CD14-positive monocyte (primary cell): ENCODE measurements at regions of chrX and their contacts with region 1.

Region 1: GRCh38 chrX:9995855-9996339 is 28.7 kb downstream of the CLDN34 start:
- DNase-seq: peak; percentile 60 to 70 (median 69)
- H3K4me3 ChIP-seq: no peak overlapping the region
- H3K4me3 Mint-ChIP-seq: no peak overlapping the region
- H3K27ac ChIP-seq: no peak overlapping the region
- H3K27ac Mint-ChIP-seq: no peak overlapping the region
- H3K4me1 ChIP-seq: no peaks in the 10 kb centered on the region
- H3K4me1 Mint-ChIP-seq: peaks cover 4% of the 10 kb centered on the region
- H3K27me3 ChIP-seq: no peaks in the 10 kb centered on the region
- H3K27me3 Mint-ChIP-seq: peaks cover 0 to 12% (median 0%) of the 10 kb centered on the region in 3 donors
- CTCF ChIP-seq: peak; percentile 90

Region 2: GRCh38 chrX:9873952-9874351 is 121.9 kb before region 1 on chrX:
- intact Hi-C with region 1: loop called in 1 of 2 experiments (anchors 10 kb)
- DNase-seq: peak; percentile 30 to 50 (median 36)
- H3K4me3 ChIP-seq: no peak overlapping the region
- H3K4me3 Mint-ChIP-seq: peak overlapping the region in 1 of 2 donors; percentile 63
- H3K27ac ChIP-seq: no peak overlapping the region
- H3K27ac Mint-ChIP-seq: no peak overlapping the region
- H3K4me1 ChIP-seq: no peaks in the 10 kb centered on the region
- H3K4me1 Mint-ChIP-seq: peaks cover 2% of the 10 kb centered on the region
- H3K27me3 ChIP-seq: no peaks in the 10 kb centered on the region
- H3K27me3 Mint-ChIP-seq: peaks cover 8 to 12% (median 10%) of the 10 kb centered on the region in 3 donors
- CTCF ChIP-seq: peak; percentile 42